Right lobe of liver (tissue), 6 donors: ENCODE measurements at regions of chr3 and their contacts with region 1.

Region 1: DNA sequence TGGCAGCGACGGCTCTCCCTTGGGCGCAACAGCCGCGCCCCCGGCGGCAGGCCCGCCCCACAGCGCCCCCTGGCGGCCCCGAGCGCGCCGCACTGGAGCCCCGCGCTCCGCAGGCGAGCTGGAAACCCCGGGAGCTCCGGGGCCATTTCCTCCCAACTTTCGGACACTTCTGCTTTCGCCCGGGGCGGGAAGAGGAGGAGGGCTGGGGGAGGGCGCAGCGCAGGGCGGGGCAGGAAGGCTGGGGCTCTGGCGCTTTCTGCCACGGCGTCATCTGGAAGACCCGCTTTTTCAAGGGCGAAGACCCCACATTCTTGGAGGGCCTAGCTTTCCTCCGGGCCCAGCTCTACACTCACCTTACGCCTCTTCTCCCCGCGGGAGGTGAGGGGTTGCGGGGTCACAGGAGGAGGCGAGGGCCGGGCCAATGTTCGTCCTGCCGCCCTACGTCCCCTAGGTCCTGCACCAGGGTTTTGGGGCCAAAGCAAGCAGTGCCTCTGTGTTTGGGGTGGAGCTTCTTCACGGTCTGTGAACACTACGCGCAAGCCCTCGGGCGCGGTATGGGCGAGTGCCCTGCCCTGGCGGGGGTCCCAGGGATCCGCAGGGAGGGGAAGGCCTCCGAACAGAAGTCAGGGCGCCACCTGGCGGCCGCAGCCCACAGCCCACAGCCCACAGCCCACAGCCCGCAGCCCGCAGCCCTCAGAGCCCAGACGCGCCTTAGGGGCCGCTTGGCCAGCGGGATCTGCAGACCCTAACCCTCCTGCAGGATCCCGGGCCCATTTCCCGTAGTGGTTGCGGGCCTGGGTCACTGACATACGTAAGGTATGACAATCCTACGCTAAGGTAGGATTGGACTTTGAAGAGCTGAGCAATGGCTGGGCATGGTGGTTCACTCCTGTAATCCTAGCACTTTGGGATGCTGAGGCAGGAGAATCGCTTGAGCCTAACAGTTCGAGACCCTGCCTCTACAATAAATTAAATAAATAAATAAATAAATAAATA is 31.1 kb downstream of the FOXL2 start:
- DNase-seq: peak; percentile 96 to 98 (median 97)
- ATAC-seq: peak; percentile 91 to 96 (median 93)
- H3K4me3 ChIP-seq: peak overlapping the region; percentile 63 to 93 (median 90)
- H3K27ac ChIP-seq: peak overlapping the region; percentile 91 to 97 (median 96)
- H3K4me1 ChIP-seq: peaks cover 0 to 5% (median 0%) of the 10 kb centered on the region in 4 donors
- H3K27me3 ChIP-seq: no peaks in the 10 kb centered on the region
- CTCF ChIP-seq: peak; percentile 86 to 96 (median 92)
- POLR2A ChIP-seq: peak; percentile 34

Region 2: DNA sequence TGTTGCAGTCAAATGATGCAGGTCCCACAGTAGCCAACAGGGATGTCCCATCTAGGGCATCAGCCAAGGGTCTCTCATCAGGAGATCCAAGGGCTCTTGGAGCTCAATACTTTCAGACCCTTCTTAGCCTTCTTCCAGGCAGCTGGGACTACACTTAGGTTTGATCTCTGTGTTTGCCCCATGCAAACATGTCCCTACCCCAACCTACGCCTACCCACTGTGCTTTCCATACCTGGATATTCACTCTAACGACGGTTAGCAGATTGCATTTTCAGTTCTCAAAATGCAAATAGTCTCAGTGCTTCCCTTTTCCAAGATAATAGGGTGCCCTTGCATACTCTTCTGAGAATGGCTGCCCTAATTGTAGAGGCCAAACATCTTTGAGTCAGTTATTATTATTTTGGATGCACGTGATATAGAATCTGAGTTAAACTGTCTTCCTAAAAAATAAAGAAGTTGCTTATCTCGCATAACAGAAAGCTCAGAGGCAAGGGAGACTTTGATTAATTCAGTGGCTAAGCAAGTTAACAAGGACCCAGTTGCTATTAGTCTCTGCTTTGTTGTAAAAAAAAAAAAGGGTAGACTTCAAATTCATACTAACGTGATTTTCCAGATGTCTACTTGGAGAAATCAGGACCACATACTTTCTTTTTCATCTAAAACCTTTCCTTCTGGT is 320.7 kb before region 1 on chr3:
- intact Hi-C with region 1: loop called (anchors 5 kb)
- DNase-seq: no peak
- ATAC-seq: no peak
- H3K4me3 ChIP-seq: peak overlapping the region in 1 of 3 donors; percentile 74
- H3K27ac ChIP-seq: no peak overlapping the region
- H3K4me1 ChIP-seq: peaks cover 0 to 14% (median 0%) of the 10 kb centered on the region in 4 donors
- H3K27me3 ChIP-seq: no peaks in the 10 kb centered on the region
- CTCF ChIP-seq: no peak
- POLR2A ChIP-seq: no peak

Region 3: DNA sequence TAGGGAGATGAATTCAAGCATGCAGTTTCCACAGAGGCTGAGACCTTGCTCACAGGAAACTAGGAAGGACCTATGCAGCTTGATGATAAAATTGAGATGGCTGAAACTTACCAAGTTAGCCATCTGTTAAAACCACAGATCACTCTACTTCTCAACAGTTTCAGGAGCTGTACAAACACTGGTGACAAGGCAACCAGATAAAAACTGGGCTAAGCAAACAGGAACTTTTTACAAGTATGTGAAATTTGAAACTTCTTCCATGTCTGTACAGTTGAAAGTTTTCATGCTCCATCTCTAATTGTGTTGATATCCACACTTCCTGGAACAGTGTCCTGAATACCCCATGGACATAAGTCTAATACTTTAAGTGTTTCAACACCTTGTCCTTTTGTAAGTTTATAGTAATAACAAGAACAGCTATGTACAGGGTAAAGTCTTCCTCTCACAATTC is 229.0 kb before region 1 on chr3:
- intact Hi-C with region 1: loop called in 1 of 2 experiments (anchors 5 kb)
- DNase-seq: no peak
- ATAC-seq: peak; percentile 70 to 77 (median 74)
- H3K4me3 ChIP-seq: no peak overlapping the region
- H3K27ac ChIP-seq: no peak overlapping the region
- H3K4me1 ChIP-seq: peaks cover 0 to 18% (median 6%) of the 10 kb centered on the region in 4 donors
- H3K27me3 ChIP-seq: no peaks in the 10 kb centered on the region
- CTCF ChIP-seq: no peak
- POLR2A ChIP-seq: no peak

Region 4: GRCh38 chr3:138842483-138843188 is 73.2 kb before region 1 on chr3:
- intact Hi-C with region 1: loop called in 1 of 2 experiments (anchors 10 kb)
- DNase-seq: no peak
- ATAC-seq: peak; percentile 26 to 65 (median 40)
- H3K4me3 ChIP-seq: no peak overlapping the region
- H3K27ac ChIP-seq: no peak overlapping the region
- H3K4me1 ChIP-seq: no peaks in the 10 kb centered on the region
- H3K27me3 ChIP-seq: no peaks in the 10 kb centered on the region
- CTCF ChIP-seq: no peak
- POLR2A ChIP-seq: no peak